ENCODE measurements at regions of chr1 and their contacts with region 1.

Region 1: DNA sequence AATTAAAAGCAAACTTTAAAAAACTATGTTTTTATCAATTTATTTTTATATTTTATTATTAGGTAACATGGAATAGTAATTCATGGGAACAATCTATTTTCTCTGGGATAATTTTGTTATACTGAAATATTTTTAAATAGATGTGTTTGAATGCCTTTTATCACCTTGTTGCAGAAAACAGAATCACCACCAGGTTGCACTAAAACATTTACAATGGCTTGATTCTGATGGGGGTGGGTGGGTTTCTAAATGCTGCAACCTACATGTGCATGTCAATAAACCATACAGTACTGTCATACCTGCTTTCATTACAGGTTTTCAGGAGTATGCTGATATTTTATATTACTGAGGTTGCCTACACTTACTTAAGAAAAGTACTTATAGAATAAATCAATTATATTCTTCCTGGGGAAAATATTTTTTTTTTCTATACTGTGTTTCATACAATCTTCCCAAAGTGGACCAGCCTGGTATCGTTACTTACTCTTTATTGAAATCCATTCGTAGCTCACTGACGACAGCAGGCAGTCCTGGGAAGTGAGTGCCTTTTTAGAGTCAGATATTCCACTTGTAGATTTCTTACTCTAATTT is 132.8 kb downstream of the PTPRC start:
- DNase-seq: no peak
- H3K4me3 ChIP-seq: no peak overlapping the region
- H3K27ac ChIP-seq: no peak overlapping the region
- H3K4me1 ChIP-seq: no peaks in the 10 kb centered on the region
- H3K27me3 ChIP-seq: no peaks in the 10 kb centered on the region
- CTCF ChIP-seq: peak in 4 of 5 experiments; percentile 28 to 42 (median 38)
- EP300 ChIP-seq: no peak
- POLR2A ChIP-seq: no peak

Region 2: DNA sequence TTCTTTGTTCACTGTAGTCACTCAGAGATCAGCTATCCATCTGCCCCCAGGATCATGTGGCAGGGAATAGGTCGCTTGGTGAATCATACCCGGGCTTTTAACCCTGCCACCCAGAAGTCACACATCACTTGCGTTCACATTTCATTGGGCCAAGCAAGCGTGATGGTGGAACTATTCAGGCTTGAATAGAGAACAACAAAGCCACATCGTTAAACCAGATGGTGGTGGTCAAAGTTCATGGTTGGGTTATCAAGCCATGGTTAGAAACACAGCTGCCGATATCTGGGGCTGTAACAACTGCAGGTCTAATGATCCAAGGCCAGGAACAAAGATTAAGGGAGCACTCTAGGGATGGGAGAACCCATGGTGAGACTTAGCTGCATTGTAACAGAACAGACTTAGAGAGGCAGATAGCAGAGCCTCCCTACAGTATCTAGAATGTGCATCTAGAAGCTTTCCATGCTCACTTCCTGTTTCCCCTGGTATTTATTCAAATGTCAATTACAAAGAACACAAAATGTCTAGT is 172.8 kb before region 1 on chr1:
- in situ Hi-C with region 1: no loop called
- intact Hi-C with region 1: no loop called
- DNase-seq: no peak
- H3K4me3 ChIP-seq: no peak overlapping the region
- H3K27ac ChIP-seq: no peak overlapping the region
- H3K4me1 ChIP-seq: no peaks in the 10 kb centered on the region
- H3K27me3 ChIP-seq: no peaks in the 10 kb centered on the region
- CTCF ChIP-seq: no peak
- EP300 ChIP-seq: no peak
- POLR2A ChIP-seq: no peak

Region 3: DNA sequence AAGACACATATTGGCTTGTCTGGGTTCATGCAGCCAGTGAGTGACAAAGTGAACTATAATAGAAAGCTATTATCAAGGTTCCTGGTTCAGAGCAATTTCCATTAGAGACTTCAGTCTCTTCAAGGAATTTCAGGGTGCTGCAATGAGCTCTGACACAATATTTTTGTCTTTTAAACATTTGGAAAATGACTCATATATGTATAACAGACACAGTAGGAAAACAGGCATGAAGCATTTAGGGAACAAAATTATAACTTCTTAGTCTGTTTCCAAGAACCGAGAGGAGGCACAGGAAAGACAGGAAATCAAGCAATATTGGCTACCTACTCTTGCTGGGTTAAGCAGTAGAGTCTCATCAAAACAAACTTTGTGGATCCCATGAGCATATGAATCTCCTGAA is 37.6 kb after region 1 on chr1:
- in situ Hi-C with region 1: no loop called
- intact Hi-C with region 1: no loop called
- DNase-seq: no peak
- H3K4me3 ChIP-seq: no peak overlapping the region
- H3K27ac ChIP-seq: no peak overlapping the region
- H3K4me1 ChIP-seq: no peaks in the 10 kb centered on the region
- H3K27me3 ChIP-seq: no peaks in the 10 kb centered on the region
- CTCF ChIP-seq: no peak
- EP300 ChIP-seq: no peak
- POLR2A ChIP-seq: no peak

Region 4: GRCh38 chr1:199113265-199113869 is 341.7 kb after region 1 on chr1:
- in situ Hi-C with region 1: loop called in 2 of 4 experiments (anchors 25 kb)
- intact Hi-C with region 1: no loop called
- DNase-seq: peak; percentile 54
- H3K4me3 ChIP-seq: no peak overlapping the region
- H3K27ac ChIP-seq: no peak overlapping the region
- H3K4me1 ChIP-seq: no peaks in the 10 kb centered on the region
- H3K27me3 ChIP-seq: no peaks in the 10 kb centered on the region
- CTCF ChIP-seq: peak; percentile 50 to 70 (median 66)
- EP300 ChIP-seq: no peak
- POLR2A ChIP-seq: no peak

Region 5: DNA sequence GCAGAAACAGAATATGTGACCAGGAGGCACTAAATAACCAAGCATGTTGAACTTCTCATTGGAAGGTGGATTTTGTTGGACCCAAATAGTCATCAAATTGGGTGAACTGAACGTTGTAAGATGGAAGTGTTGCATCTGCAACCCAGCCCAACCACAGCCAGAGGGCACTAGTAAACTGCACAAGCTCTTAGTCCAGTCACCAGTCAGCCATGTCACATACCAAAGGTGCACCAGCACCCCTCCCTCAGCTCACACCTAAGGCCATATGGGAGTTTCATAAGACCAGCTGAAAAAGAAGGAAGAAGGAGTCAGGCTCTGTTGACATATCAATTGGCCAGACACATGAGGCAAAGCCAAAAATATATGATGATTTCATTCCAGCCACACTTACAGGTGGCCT is 774.1 kb after region 1 on chr1:
- in situ Hi-C with region 1: loop called in 1 of 4 experiments (anchors 25 kb)
- intact Hi-C with region 1: no loop called
- DNase-seq: peak; percentile 10
- H3K4me3 ChIP-seq: no peak overlapping the region
- H3K27ac ChIP-seq: no peak overlapping the region
- H3K4me1 ChIP-seq: no peaks in the 10 kb centered on the region
- H3K27me3 ChIP-seq: no peaks in the 10 kb centered on the region
- CTCF ChIP-seq: peak in 3 of 5 experiments; percentile 18 to 23 (median 21)
- EP300 ChIP-seq: no peak
- POLR2A ChIP-seq: no peak

Region 6: GRCh38 chr1:200510228-200510623 is 1738.6 kb after region 1 on chr1:
- in situ Hi-C with region 1: loop called in 1 of 4 experiments (anchors 25 kb)
- intact Hi-C with region 1: no loop called
- DNase-seq: peak; percentile 74
- H3K4me3 ChIP-seq: no peak overlapping the region
- H3K27ac ChIP-seq: no peak overlapping the region
- H3K4me1 ChIP-seq: peaks cover 0 to 7% (median 0%) of the 10 kb centered on the region in 4 donors
- H3K27me3 ChIP-seq: peaks cover 15% of the 10 kb centered on the region
- CTCF ChIP-seq: peak; percentile 82 to 98 (median 91)
- EP300 ChIP-seq: no peak
- POLR2A ChIP-seq: no peak